ENCODE measurements at regions of chr15 and their contacts with region 1.

Region 1: GRCh38 chr15:98421419-98422129 is 226.8 kb upstream of the IGF1R start:
- DNase-seq: peak; percentile 90
- H3K4me3 Mint-ChIP-seq: peak overlapping the region; percentile 35
- H3K27ac Mint-ChIP-seq: no peak overlapping the region
- H3K4me1 Mint-ChIP-seq: peaks cover 7% of the 10 kb centered on the region
- H3K27me3 Mint-ChIP-seq: peaks cover 27% of the 10 kb centered on the region

Region 2: DNA sequence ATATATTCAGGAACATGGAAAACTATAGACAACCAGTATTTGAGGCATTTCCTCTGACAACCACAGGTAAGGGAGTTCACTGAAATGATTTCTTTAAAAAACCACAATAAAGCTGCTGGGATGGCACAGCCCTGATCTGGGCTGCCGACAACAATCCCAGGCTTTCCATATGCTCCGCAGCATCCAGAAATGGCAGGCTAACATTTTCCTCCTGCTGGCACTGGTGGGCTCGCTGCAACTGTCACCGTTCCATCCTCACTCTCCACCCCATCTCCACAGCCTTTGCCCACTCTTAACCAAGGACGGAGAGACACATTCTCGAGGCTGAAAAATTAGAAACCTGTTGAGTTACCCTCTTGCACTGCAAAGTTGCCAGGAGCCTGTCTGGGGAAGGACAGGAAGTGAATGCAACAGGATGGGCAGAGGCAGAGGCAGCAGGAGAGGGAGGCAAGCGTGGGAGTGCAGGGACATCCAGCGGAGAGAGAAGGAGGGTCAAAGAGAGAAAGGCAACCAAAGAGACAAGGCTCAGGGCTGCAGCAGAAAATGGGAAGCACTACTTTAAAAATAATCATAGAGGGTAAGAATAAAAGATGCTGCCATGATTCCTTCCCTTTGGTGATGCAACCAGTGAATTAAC is 540.1 kb before region 1 on chr15:
- intact Hi-C with region 1: no loop called
- DNase-seq: no peak
- H3K4me3 Mint-ChIP-seq: no peak overlapping the region
- H3K27ac Mint-ChIP-seq: no peak overlapping the region
- H3K4me1 Mint-ChIP-seq: no peaks in the 10 kb centered on the region
- H3K27me3 Mint-ChIP-seq: no peaks in the 10 kb centered on the region

Region 3: DNA sequence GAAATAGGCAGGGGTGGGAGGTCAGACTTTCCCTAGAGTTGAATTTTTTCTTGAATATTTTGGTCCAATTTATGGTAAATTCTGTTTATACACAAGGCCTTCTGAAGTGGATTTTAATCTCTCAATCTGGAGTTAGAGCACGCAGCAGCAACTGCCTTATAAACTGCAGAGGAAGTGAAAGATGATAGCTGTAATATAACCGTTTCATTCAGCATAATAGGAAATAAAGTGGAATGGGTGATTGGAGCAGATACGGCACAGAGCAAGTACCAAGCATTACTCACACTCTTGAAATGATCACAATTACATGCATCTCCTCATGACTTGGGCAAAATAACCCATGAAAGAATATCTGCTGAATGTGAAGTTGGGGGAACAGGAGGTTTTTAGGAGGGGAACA is 354.2 kb before region 1 on chr15:
- intact Hi-C with region 1: no loop called
- DNase-seq: no peak
- H3K4me3 Mint-ChIP-seq: no peak overlapping the region
- H3K27ac Mint-ChIP-seq: no peak overlapping the region
- H3K4me1 Mint-ChIP-seq: no peaks in the 10 kb centered on the region
- H3K27me3 Mint-ChIP-seq: peaks cover 2% of the 10 kb centered on the region

Region 4: GRCh38 chr15:98292442-98293240 is 128.9 kb before region 1 on chr15:
- intact Hi-C with region 1: loop called (anchors 5 kb)
- DNase-seq: peak; percentile 77
- H3K4me3 Mint-ChIP-seq: no peak overlapping the region
- H3K27ac Mint-ChIP-seq: no peak overlapping the region
- H3K4me1 Mint-ChIP-seq: no peaks in the 10 kb centered on the region
- H3K27me3 Mint-ChIP-seq: peaks cover 24% of the 10 kb centered on the region

Region 5: GRCh38 chr15:98311566-98312188 is 109.9 kb before region 1 on chr15:
- intact Hi-C with region 1: loop called (anchors 1 kb)
- DNase-seq: peak; percentile 92
- H3K4me3 Mint-ChIP-seq: no peak overlapping the region
- H3K27ac Mint-ChIP-seq: no peak overlapping the region
- H3K4me1 Mint-ChIP-seq: peaks cover 4% of the 10 kb centered on the region
- H3K27me3 Mint-ChIP-seq: no peaks in the 10 kb centered on the region